Cardiac septum (tissue), 1 donor: ENCODE measurements at regions of chr17 and their contacts with region 1.

Region 1: DNA sequence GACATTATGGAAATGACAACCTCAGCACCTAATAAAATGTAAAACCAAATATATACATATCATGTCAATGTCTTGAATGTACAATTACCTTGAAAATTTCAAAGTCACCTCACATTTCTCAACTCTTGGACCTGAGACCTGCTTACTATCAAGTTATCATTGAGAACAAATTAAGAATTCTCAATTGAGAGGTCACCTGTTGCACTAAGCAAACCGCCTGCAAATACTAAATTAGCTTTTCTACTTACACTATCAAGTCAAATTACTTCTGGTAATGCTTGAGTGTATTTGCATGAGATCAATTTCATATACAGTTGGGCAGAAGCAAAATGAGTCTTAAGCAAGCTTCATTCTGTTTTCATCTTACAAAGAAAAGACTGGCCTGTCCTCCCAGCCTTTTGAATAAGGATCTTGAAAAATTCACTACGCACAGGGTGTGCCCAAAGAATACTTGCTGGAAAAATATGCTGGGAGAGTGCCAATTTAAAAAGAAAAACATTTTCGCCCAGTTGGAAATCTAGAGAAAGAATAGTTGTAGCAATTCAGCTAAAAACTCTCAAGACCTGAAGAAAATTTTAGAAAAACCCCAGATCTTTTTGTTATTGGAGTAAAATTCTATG is 35.7 kb downstream of the KANSL1 start:
- DNase-seq: no peak

Region 2: GRCh38 chr17:46108550-46109110 is 48.9 kb before region 1 on chr17:
- intact Hi-C with region 1: loop called (anchors 5 kb)
- DNase-seq: no peak